ENCODE measurements at regions of chr17 and their contacts with region 1.

Region 1: GRCh38 chr17:7687908-7688807 is at the start of gene WRAP53:
- DNase-seq: peak; percentile 97
- H3K4me3 Mint-ChIP-seq: peak within 1 kb of the TSS; percentile 93
- H3K27ac Mint-ChIP-seq: peak within 1 kb of the TSS; percentile 98
- H3K4me1 Mint-ChIP-seq: peaks cover 42% of the 10 kb centered on the region
- H3K27me3 Mint-ChIP-seq: peaks cover 5% of the 10 kb centered on the region

Region 2: GRCh38 chr17:7435221-7435675 is 252.9 kb before region 1 on chr17 and contains the start of gene TMEM102:
- CTCF ChIA-PET with region 1: interaction called, 13 read pairs
- DNase-seq: peak; percentile 99
- H3K4me3 Mint-ChIP-seq: peak within 1 kb of the TSS; percentile 94
- H3K27ac Mint-ChIP-seq: peak within 1 kb of the TSS; percentile 97
- H3K4me1 Mint-ChIP-seq: peaks cover 44% of the 10 kb centered on the region
- H3K27me3 Mint-ChIP-seq: peaks cover 27% of the 10 kb centered on the region

Region 3: DNA sequence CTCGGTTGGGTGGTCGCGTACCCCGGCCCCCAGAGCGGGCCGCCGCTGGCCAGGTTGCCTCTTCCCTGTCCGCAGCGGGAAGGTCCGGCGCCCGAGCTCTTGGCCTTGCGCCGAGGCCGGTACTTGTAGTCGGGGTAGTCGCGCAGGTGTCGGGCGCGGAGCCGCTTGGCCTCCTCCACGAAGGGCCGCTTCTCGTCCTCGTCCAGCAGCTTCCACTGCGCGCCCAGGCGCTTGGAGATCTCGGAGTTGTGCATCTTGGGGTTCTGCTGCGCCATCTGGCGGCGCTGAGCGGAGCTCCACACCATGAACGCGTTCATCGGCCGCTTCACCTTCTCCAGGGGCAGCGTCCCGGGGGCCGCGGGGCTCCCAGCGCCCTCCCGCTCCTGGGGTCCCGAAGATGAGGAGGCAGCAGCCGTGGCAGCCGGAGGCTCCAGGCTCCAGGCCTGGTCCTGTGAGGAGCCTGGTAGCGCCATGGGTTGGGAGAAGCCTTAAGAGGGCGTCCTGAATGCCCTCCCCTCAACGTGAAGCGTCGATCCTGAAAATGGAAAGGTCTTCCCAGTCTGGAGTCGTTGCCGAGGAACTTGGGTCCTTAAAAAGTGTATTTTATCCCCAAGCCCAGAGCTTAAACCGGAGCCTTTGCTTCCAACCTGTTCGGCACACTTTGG is 98.8 kb before region 1 on chr17:
- CTCF ChIA-PET with region 1: interaction called, 13 read pairs
- DNase-seq: peak; percentile 80
- H3K4me3 Mint-ChIP-seq: no peak overlapping the region
- H3K27ac Mint-ChIP-seq: no peak overlapping the region
- H3K4me1 Mint-ChIP-seq: peaks cover 22% of the 10 kb centered on the region
- H3K27me3 Mint-ChIP-seq: no peaks in the 10 kb centered on the region

Region 4: DNA sequence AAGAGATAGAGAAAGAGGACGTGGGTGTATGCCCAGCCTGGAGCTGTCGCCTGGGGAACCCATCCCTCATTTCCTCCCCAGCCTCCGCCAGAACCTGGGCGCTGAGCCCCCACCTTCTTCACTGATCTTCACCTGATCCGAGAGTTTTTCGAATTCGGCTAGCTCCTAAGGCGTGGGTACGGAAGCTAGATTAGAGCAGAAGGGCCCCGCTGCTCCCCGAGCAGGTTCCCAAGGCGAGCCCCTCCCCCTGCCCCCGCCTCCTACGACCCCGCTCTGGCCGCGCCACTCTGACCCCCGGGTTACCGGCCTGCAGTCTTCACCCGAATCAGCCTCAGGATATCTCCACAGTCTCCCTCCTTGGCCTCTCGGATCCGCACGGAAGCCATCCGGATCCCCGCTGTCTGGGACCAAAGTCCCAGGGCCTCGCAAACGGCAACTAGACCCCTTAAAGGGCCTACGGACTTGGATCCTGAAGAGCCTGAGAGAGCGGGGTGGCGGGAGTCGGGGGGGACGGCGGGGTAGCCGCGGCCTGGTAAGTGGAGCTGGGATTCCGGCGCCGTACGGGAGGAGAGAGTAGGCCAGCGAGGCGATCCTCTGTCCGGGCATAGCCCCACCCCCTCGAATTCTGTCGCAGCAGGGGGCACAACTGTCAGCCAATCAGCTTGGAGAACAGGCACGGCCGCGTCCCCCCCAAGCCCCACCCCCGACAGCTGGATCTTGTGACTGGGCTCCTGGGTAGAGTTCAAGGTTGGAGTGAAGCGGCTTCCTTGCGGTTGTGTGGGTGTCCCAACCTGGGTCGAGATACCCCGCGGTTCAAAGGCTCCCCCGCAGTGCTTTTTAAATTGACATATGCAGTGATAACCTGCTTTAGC is 60.7 kb before region 1 on chr17 and contains the start of gene SAT2:
- CTCF ChIA-PET with region 1: interaction called, 60 read pairs
- DNase-seq: peak; percentile 93
- H3K4me3 Mint-ChIP-seq: peak within 1 kb of the TSS; percentile 91
- H3K27ac Mint-ChIP-seq: peak within 1 kb of the TSS; percentile 71
- H3K4me1 Mint-ChIP-seq: peaks cover 20% of the 10 kb centered on the region
- H3K27me3 Mint-ChIP-seq: peaks cover 7% of the 10 kb centered on the region

Region 5: GRCh38 chr17:7632492-7632894 is 55.7 kb before region 1 on chr17:
- CTCF ChIA-PET with region 1: interaction called, 60 read pairs
- DNase-seq: peak; percentile 58
- H3K4me3 Mint-ChIP-seq: no peak overlapping the region
- H3K27ac Mint-ChIP-seq: peak overlapping the region; percentile 17
- H3K4me1 Mint-ChIP-seq: peaks cover 9% of the 10 kb centered on the region
- H3K27me3 Mint-ChIP-seq: peaks cover 24% of the 10 kb centered on the region